ENCODE measurements at regions of chr5 and their contacts with region 1.

Region 1: GRCh38 chr5:168409580-168410458 is 76.5 kb upstream of the RARS1 start:
- DNase-seq: no peak
- ATAC-seq: no peak
- H3K4me3 Mint-ChIP-seq: no peak overlapping the region
- H3K27ac Mint-ChIP-seq: peak overlapping the region; percentile 54; the same call in 1 of the 2 replicates
- H3K4me1 Mint-ChIP-seq: no peaks in the 10 kb centered on the region
- H3K27me3 Mint-ChIP-seq: no peaks in the 10 kb centered on the region
- CTCF ChIP-seq: no peak

Region 2: GRCh38 chr5:168219515-168220410 is 190.1 kb before region 1 on chr5:
- CTCF ChIA-PET with region 1: no interaction called
- POLR2A ChIA-PET with region 1: no interaction called
- DNase-seq: peak; percentile 59
- ATAC-seq: peak; percentile 72
- H3K4me3 Mint-ChIP-seq: no peak overlapping the region
- H3K27ac Mint-ChIP-seq: no peak overlapping the region; the same call in 1 of the 2 replicates
- H3K4me1 Mint-ChIP-seq: peaks cover 39% of the 10 kb centered on the region
- H3K27me3 Mint-ChIP-seq: no peaks in the 10 kb centered on the region
- CTCF ChIP-seq: peak; percentile 79

Region 3: DNA sequence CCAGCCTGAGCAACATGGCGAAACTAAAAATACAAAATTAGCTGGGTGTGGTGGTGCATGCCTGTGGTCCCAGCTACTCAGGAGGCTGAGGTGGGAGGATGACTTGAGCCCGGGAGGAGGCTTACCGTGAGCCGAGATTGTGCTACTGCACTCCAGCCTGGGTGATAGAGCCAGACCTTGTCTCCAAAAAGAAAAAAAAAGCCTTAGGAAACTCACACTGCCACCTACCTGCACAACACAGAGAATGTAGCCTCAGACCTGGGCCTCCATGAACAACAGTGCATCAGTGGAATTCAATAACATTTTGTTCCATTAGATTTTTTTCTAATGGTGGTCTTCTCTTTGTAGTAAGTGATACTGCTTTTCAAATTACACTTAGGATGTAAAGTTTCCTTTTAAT is 12.6 kb after region 1 on chr5:
- CTCF ChIA-PET with region 1: no interaction called
- POLR2A ChIA-PET with region 1: interaction called, 10 read pairs
- DNase-seq: no peak
- ATAC-seq: peak; percentile 84
- H3K4me3 Mint-ChIP-seq: no peak overlapping the region
- H3K27ac Mint-ChIP-seq: no peak overlapping the region
- H3K4me1 Mint-ChIP-seq: no peaks in the 10 kb centered on the region
- H3K27me3 Mint-ChIP-seq: no peaks in the 10 kb centered on the region
- CTCF ChIP-seq: no peak

Region 4: GRCh38 chr5:168612996-168613395 is 203.2 kb after region 1 on chr5:
- CTCF ChIA-PET with region 1: no interaction called
- POLR2A ChIA-PET with region 1: no interaction called
- DNase-seq: no peak
- ATAC-seq: no peak
- H3K4me3 Mint-ChIP-seq: no peak overlapping the region
- H3K27ac Mint-ChIP-seq: no peak overlapping the region
- H3K4me1 Mint-ChIP-seq: no peaks in the 10 kb centered on the region
- H3K27me3 Mint-ChIP-seq: peaks cover 4% of the 10 kb centered on the region; the same call in 1 of the 2 replicates
- CTCF ChIP-seq: no peak

Measured in WTC11 (cell line).